ENCODE measurements at regions of chr5 and their contacts with region 1.

Region 1: DNA sequence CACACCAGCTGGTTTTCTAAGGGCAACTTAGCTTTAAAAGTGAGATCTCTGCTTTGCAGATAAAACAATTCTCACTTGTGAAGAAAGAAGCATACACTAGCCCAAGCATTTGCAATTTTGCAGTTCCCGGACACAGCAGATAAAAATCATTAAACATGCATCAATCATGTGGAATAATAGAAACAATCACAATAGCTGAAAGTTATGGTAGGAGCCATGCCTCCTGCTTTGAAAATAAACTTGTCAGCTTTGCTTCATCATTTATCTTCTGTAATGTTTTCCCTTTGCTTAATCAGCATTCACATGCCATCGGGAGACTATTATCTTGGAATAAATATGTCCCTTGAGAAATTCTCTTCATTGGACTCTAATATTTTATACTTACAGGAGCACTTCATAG is 60.3 kb upstream of the DAB2 start:
- DNase-seq: no peak
- H3K4me3 ChIP-seq: no peak overlapping the region
- H3K27ac ChIP-seq: no peak overlapping the region
- H3K4me1 ChIP-seq: no peaks in the 10 kb centered on the region
- H3K27me3 ChIP-seq: no peaks in the 10 kb centered on the region
- CTCF ChIP-seq: no peak
- POLR2A ChIP-seq: no peak

Region 2: DNA sequence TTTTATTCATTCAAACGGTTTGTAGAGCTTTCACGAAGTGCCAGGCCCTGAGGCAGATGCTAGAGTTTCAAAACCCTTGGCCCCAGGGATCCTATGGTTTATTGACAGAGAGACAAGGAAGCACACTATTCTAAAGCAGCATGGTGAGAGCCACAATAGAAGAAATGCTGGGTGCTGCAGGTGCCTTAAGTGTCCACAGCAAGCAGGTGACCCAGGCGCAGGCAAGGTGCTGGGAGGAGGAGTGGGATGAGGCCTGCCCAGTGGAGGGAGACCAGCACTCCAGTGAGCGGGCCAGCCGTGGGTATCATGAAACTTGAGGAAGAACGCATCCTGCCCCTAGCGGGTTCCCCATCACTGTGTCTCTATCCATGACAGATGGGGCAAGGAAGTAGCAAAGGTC is 568.3 kb before region 1 on chr5:
- intact Hi-C with region 1: no loop called
- DNase-seq: no peak
- H3K4me3 ChIP-seq: no peak overlapping the region
- H3K27ac ChIP-seq: no peak overlapping the region
- H3K4me1 ChIP-seq: no peaks in the 10 kb centered on the region
- H3K27me3 ChIP-seq: no peaks in the 10 kb centered on the region
- CTCF ChIP-seq: no peak
- POLR2A ChIP-seq: no peak

Region 3: GRCh38 chr5:40841068-40841805 is 1356.2 kb after region 1 on chr5 and contains the start of gene CARD6:
- intact Hi-C with region 1: loop called (anchors 10 kb)
- DNase-seq: no peak
- H3K4me3 ChIP-seq: peak within 1 kb of the TSS; percentile 43 to 61 (median 44)
- H3K27ac ChIP-seq: peak within 1 kb of the TSS; percentile 73 to 81
- H3K4me1 ChIP-seq: no peaks in the 10 kb centered on the region
- H3K27me3 ChIP-seq: no peaks in the 10 kb centered on the region
- CTCF ChIP-seq: no peak
- POLR2A ChIP-seq: no peak
- total RNA-seq, gene CARD6: 16.1 to 25.8 (median 16.7) TPM